ENCODE measurements at regions of chr2 and their contacts with region 1.

Region 1: GRCh38 chr2:32291746-32292145 is 14.0 kb downstream of the YIPF4 start:
- DNase-seq: no peak
- H3K4me3 ChIP-seq: no peak overlapping the region
- CTCF ChIP-seq: no peak

Region 2: DNA sequence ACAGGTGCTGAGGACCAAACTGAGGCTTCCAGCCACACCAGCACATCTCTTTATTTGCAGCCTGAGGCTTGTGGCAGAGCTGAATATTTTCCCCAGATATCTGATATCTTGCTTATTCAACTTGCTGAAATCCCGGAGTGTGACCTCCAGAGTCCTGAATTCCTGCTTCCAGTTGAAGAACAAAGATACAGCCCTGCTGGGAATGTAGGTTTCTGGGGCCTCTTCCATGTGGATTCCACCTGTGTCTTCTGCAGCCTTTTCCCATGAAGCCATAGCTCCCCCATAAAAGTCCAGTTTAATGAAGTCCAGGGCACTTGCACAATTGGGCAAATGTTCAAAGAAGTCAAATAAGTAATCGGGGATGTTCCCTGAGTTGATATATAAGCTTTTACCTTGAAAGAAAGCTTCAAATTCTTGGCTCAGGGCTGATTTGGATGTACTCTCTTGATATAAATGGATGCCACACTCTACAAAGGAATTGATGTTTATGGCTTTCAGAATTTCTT is 42.0 kb before region 1 on chr2:
- in situ Hi-C with region 1: loop called (anchors 5 kb)
- DNase-seq: no peak
- H3K4me3 ChIP-seq: no peak overlapping the region
- CTCF ChIP-seq: no peak

Measured in astrocyte of the cerebellum (primary cell).